B cell (primary cell): ENCODE measurements at regions of chr1 and their contacts with region 1.

Region 1: GRCh38 chr1:32716312-32717148 is 14.0 kb upstream of the SYNC start:
- DNase-seq: peak; percentile 48
- ATAC-seq: peak; percentile 46
- H3K4me3 ChIP-seq: no peak overlapping the region
- H3K4me3 Mint-ChIP-seq: no peak overlapping the region
- H3K27ac ChIP-seq: no peak overlapping the region
- H3K27ac Mint-ChIP-seq: no peak overlapping the region
- H3K4me1 ChIP-seq: peaks cover 6 to 13% of the 10 kb centered on the region in 2 donors
- H3K4me1 Mint-ChIP-seq: peaks cover 7% of the 10 kb centered on the region
- H3K27me3 ChIP-seq: peaks cover 0 to 27% (median 3%) of the 10 kb centered on the region in 4 experiments
- H3K27me3 Mint-ChIP-seq: peaks cover 16% of the 10 kb centered on the region
- CTCF ChIP-seq: no peak

Region 2: GRCh38 chr1:32647308-32648134 is 69.0 kb before region 1 on chr1:
- CTCF ChIA-PET with region 1: no interaction called
- POLR2A ChIA-PET with region 1: no interaction called
- intact Hi-C with region 1: no loop called
- DNase-seq: no peak
- ATAC-seq: no peak
- H3K4me3 ChIP-seq: no peak overlapping the region
- H3K4me3 Mint-ChIP-seq: peak overlapping the region; percentile 11
- H3K27ac ChIP-seq: peak overlapping the region in 1 of 2 donors; percentile 43
- H3K27ac Mint-ChIP-seq: peak overlapping the region; percentile 47
- H3K4me1 ChIP-seq: peaks cover 21 to 24% of the 10 kb centered on the region in 2 donors
- H3K4me1 Mint-ChIP-seq: peaks cover 30% of the 10 kb centered on the region
- H3K27me3 ChIP-seq: no peaks in the 10 kb centered on the region
- H3K27me3 Mint-ChIP-seq: no peaks in the 10 kb centered on the region
- CTCF ChIP-seq: no peak

Region 3: DNA sequence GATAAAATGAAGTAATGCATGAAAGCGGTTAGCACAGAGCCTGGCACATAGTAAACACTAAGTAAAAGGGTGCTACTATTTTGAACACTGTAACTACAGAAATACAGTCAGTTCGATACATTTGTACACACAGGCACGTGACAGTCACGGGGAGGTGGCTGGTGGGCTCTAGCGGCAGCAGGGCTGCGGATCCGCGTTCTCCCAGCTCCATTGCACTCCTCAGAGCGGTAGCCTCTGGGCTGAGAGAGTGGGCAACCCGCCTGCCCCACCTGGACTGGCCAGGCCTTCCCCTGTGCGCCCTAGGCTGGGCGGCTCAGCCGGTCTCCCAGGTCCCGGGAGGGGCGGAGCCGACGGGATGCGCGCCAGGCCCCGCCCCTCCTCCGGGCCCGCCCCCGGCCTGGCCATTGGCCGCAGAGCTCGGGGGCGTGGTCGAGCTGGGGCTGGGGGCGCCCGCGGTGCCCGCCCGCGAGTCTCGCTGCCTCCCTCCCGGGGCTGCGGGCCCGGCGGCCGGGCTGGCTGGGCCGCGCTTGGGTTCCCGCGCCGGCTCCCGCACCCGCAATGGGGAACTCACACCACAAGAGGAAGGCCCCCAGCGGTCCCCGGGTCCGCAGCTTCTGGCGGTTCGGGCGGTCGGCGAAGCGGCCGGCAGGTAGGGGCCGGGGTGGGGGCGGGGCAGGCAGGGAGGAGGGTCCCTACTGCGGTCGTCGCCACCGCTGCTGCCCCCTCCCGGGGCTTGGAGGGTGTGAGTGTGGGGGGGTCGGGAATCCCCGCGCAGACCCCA is 37.2 kb after region 1 on chr1:
- CTCF ChIA-PET with region 1: interaction called, 4 read pairs
- POLR2A ChIA-PET with region 1: no interaction called
- intact Hi-C with region 1: loop called (anchors 1 kb)
- DNase-seq: peak; percentile 83
- ATAC-seq: peak; percentile 94
- H3K4me3 ChIP-seq: peak overlapping the region; percentile 31 to 61 (median 48)
- H3K4me3 Mint-ChIP-seq: peak overlapping the region; percentile 86
- H3K27ac ChIP-seq: no peak overlapping the region
- H3K27ac Mint-ChIP-seq: peak overlapping the region; percentile 51
- H3K4me1 ChIP-seq: peaks cover 11 to 15% of the 10 kb centered on the region in 2 donors
- H3K4me1 Mint-ChIP-seq: peaks cover 11% of the 10 kb centered on the region
- H3K27me3 ChIP-seq: peaks cover 0 to 36% (median 4%) of the 10 kb centered on the region in 4 experiments
- H3K27me3 Mint-ChIP-seq: peaks cover 22% of the 10 kb centered on the region
- CTCF ChIP-seq: no peak

Region 4: DNA sequence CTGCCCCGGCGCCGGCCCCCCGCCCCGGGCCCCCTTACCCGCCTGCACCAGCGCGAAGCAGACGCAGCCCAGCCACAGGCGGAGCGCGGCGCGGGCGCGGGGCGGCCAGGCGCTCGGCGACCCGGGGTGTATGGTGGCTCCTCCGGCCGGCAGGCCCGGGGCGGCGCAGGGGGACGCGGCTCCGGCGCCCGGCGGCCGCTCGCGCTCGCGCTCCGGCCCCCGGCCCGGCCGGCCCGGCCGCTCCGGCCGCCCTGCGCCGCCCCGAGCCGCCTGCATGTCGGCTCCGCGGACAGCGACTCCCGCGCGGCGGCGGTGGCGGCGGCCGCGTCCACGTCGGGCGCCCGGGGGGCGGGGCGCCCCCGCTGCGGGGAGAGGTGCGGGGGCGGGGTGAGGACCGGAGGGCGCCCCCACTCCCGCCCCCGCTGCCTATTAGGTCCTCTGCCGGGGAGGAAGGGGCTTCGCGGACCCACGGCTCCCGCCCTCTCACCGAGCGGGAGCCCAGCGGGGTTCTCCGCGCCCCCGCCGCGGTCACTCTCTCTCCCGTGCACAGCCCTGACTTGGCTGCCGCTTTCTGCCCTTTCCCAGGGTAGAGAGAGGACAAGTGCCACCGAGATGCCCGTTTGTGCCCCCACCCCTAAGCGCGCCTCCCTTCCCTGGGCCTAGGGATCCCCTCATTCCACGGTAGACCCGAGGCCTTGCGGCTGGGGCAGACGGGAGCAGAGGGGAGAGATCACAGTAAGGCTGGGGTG is 154.3 kb after region 1 on chr1 and contains the start of gene FNDC5:
- CTCF ChIA-PET with region 1: interaction called, 42 read pairs
- POLR2A ChIA-PET with region 1: no interaction called
- intact Hi-C with region 1: loop called (anchors 1 kb)
- DNase-seq: peak; percentile 37
- ATAC-seq: peak; percentile 14
- H3K4me3 ChIP-seq: peak within 1 kb of the TSS in 4 of 5 experiments; percentile 11 to 44 (median 25)
- H3K4me3 Mint-ChIP-seq: peak within 1 kb of the TSS; percentile 83
- H3K27ac ChIP-seq: no peak within 1 kb of the TSS
- H3K27ac Mint-ChIP-seq: no peak within 1 kb of the TSS
- H3K4me1 ChIP-seq: peaks cover 25 to 29% of the 10 kb centered on the region in 2 donors
- H3K4me1 Mint-ChIP-seq: peaks cover 37% of the 10 kb centered on the region
- H3K27me3 ChIP-seq: peaks cover 0 to 53% (median 19%) of the 10 kb centered on the region in 4 experiments
- H3K27me3 Mint-ChIP-seq: peaks cover 37% of the 10 kb centered on the region
- CTCF ChIP-seq: no peak
- total RNA-seq, gene FNDC5: 0.75 and 0.76 TPM in 2 replicates

Region 5: DNA sequence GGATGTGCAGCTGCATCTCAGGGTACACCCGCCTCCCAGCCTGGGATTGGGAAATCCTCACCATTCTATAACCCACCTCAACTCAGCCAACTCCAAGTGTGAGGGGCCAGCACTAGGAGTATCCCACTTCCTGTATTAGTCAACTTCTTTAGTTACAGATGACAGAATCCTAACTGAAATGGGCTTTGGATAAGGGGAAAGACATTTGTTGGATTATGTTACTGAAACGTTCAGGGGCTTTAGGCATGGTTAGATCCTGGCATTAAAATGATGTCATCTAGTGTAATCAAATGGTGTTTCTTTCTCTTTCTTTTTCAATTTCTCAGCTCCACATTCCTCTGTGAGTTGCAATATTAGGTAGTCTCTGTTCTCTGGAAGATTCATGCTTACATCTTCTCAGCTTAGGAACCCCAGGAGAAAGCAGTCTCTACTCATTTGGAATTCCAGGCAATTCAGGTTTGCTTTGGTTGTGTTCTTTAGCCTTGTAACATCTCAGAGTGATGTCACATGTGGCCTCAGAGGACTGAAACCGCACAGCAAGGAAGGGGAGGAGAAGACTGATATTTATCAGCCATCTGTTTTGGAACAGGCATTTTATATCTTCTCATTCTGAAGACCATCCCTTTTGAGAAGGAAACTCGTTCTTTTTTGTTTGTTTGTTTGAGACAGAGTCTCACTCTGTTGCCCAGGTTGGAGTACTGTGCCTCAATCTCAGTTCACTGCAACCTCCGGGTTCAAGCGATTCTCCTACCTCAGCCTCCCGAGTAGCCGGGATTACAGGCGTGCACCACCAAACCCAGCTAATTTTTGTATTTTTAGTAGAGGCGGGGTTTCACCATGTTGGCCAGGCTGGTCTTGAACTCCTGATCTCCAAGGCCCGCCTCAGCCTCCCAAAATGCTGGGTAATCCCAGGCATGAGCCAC is 203.5 kb after region 1 on chr1:
- CTCF ChIA-PET with region 1: no interaction called
- POLR2A ChIA-PET with region 1: no interaction called
- intact Hi-C with region 1: no loop called
- DNase-seq: no peak
- ATAC-seq: no peak
- H3K4me3 ChIP-seq: no peak overlapping the region
- H3K4me3 Mint-ChIP-seq: no peak overlapping the region
- H3K27ac ChIP-seq: no peak overlapping the region
- H3K27ac Mint-ChIP-seq: no peak overlapping the region
- H3K4me1 ChIP-seq: peaks cover 8 to 13% of the 10 kb centered on the region in 2 donors
- H3K4me1 Mint-ChIP-seq: peaks cover 9% of the 10 kb centered on the region
- H3K27me3 ChIP-seq: peaks cover 0 to 63% (median 25%) of the 10 kb centered on the region in 4 experiments
- H3K27me3 Mint-ChIP-seq: peaks cover 61% of the 10 kb centered on the region
- CTCF ChIP-seq: no peak

Region 6: GRCh38 chr1:33086384-33086850 is 369.9 kb after region 1 on chr1:
- CTCF ChIA-PET with region 1: interaction called, 34 read pairs
- POLR2A ChIA-PET with region 1: no interaction called
- intact Hi-C with region 1: no loop called
- DNase-seq: peak; percentile 68
- ATAC-seq: peak; percentile 53
- H3K4me3 ChIP-seq: no peak overlapping the region
- H3K4me3 Mint-ChIP-seq: no peak overlapping the region
- H3K27ac ChIP-seq: no peak overlapping the region
- H3K27ac Mint-ChIP-seq: no peak overlapping the region
- H3K4me1 ChIP-seq: peaks cover 19 to 24% of the 10 kb centered on the region in 2 donors
- H3K4me1 Mint-ChIP-seq: peaks cover 32% of the 10 kb centered on the region
- H3K27me3 ChIP-seq: peaks cover 0 to 5% (median 2%) of the 10 kb centered on the region in 4 experiments
- H3K27me3 Mint-ChIP-seq: peaks cover 10% of the 10 kb centered on the region
- CTCF ChIP-seq: peak; percentile 74